Cardiac septum (tissue), 1 donor: ENCODE measurements at regions of chrX and their contacts with region 1.

Region 1: GRCh38 chrX:37825209-37825842 is 22.0 kb downstream of the DYNLT3 start:
- DNase-seq: no peak

Region 2: GRCh38 chrX:37010496-37010895 is 814.8 kb before region 1 on chrX:
- intact Hi-C with region 1: no loop called
- DNase-seq: no peak

Region 3: DNA sequence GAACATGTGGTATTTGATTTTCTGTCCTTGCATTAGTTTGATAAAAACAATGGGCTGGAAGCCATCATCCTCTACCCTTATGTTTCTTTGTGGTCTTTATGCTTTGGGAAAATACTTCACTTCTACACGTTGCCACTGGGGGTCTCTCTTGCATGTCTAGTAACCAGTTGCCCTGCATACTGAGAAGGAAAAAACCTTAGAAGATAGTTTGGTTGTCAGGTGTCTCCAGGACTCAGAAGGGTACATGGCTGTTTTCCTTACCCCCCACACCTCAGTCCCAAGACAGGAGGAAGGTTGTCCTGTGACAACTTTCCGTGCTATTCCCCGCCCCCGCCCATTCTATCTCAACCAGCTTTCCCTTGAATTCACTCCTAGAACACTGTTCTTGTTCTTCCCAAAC is 316.0 kb before region 1 on chrX:
- intact Hi-C with region 1: loop called (anchors 2 kb)
- DNase-seq: no peak

Region 4: GRCh38 chrX:37745354-37745753 is 80.0 kb before region 1 on chrX:
- intact Hi-C with region 1: loop called (anchors 5 kb)
- DNase-seq: peak; percentile 83

Region 5: DNA sequence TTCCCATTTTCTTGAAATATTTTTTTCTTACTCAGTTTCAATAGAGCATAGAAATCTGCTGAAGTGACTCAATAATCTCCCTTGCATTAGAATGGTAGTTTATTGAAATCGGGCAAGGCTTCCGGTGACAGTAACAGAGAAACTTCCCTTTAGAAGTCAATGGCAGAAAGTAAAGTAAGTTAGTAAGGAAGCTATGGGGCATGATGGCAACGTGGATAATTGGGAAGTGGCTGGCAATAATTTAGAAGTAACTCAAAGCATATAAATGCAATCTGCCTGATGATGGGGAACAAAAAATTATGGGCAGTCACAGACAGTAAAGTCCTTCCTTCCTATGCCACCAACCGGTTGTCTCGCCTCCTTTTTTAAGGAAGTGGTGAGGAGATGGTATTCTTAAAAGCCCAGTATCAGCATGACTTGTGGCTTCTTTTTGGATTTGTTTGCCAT is 37.9 kb before region 1 on chrX:
- intact Hi-C with region 1: no loop called
- DNase-seq: no peak

Region 6: GRCh38 chrX:37883196-37883595 is 57.9 kb after region 1 on chrX:
- intact Hi-C with region 1: no loop called
- DNase-seq: no peak

Region 7: GRCh38 chrX:37976153-37976552 is 150.8 kb after region 1 on chrX:
- intact Hi-C with region 1: no loop called
- DNase-seq: no peak